Upper lobe of right lung (tissue), 1 donor: ENCODE measurements at regions of chr15 and their contacts with region 1.

Region 1: DNA sequence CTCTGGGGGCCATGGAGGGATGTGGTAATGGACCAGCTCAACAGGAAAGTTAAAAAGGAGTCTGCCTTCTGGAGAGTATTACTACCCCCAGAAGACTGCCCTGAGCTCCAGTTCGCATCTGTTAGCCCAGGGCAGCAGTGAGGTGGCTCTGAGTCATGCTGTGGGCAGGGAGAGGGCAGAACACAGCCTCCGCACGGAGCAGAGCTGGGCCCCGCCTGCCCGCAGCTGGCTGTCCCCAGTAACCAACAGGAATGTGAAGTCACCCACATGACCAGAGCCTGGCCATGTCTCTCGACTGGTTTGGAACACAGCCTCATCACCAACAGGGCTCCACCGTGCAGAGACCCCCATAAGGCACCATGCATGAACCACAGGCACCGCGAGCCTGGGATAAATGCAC is 62.1 kb downstream of the CYFIP1 start:
- DNase-seq: no peak
- ATAC-seq: no peak
- H3K4me3 ChIP-seq: no peak overlapping the region
- H3K27ac ChIP-seq: no peak overlapping the region
- H3K4me1 ChIP-seq: no peaks in the 10 kb centered on the region
- H3K27me3 ChIP-seq: no peaks in the 10 kb centered on the region
- CTCF ChIP-seq: no peak

Region 2: GRCh38 chr15:23003736-23004135 is 85.7 kb after region 1 on chr15:
- intact Hi-C with region 1: loop called (anchors 10 kb)
- DNase-seq: no peak
- ATAC-seq: no peak
- H3K4me3 ChIP-seq: no peak overlapping the region
- H3K27ac ChIP-seq: no peak overlapping the region
- H3K4me1 ChIP-seq: no peaks in the 10 kb centered on the region
- H3K27me3 ChIP-seq: no peaks in the 10 kb centered on the region
- CTCF ChIP-seq: no peak